MCF 10A (cell line): ENCODE measurements at regions of chr4 and their contacts with region 1.

Region 1: DNA sequence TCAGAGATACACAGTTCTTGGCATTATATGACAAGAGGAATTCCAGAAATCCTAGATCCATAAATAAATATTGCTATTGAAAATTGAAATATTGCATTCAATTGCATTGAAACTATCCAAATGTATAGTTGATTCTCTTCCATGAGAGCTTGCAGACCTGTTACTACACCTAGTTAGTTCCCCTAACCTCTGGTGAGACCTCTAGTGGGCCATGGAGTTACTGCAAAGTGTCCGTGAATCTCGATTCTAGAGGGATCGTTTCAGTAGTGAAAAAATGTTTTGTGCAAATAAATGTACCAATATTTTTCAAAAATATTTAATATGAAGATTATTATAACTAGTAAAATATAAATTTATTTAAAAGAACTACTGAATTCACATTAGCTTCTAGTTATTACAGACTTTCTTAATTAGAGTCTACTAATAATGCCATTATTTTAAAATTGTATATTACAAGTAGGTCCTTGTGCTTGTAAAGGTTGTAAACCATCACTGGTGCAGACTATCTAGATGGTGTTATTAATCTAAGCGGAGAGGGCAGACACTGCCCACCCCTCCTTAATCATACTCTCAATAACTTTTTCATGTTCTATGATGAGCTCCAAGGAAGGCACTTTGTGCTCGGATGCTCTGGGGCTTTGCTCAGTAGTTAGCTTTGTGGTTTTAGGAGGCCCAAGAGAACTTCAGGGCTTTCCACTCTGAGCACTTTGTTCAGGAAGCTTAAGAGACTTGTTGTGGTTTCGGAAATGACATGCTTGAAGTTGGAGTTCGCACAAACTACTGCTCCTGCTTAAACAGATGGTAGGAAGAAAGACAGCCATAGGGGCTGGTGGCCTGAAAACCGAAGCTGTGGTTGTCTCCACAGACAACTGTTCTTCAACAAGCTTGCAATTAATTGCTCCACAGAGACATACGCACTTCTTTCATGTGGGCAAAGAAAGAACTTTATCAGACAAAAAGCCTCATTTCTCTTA is 42.8 kb downstream of the IL21 start:
- DNase-seq: peak; percentile 78
- H3K4me3 Mint-ChIP-seq: no peak overlapping the region
- H3K27ac Mint-ChIP-seq: no peak overlapping the region
- H3K4me1 Mint-ChIP-seq: peaks cover 7% of the 10 kb centered on the region
- H3K27me3 Mint-ChIP-seq: peaks cover 10% of the 10 kb centered on the region
- CTCF ChIP-seq: peak; percentile 60

Region 2: GRCh38 chr4:121863799-121864198 is 714.3 kb before region 1 on chr4:
- CTCF ChIA-PET with region 1: no interaction called
- POLR2A ChIA-PET with region 1: no interaction called
- intact Hi-C with region 1: no loop called
- DNase-seq: no peak
- H3K4me3 Mint-ChIP-seq: no peak overlapping the region
- H3K27ac Mint-ChIP-seq: no peak overlapping the region
- H3K4me1 Mint-ChIP-seq: peaks cover 5% of the 10 kb centered on the region
- H3K27me3 Mint-ChIP-seq: no peaks in the 10 kb centered on the region
- CTCF ChIP-seq: no peak

Region 3: DNA sequence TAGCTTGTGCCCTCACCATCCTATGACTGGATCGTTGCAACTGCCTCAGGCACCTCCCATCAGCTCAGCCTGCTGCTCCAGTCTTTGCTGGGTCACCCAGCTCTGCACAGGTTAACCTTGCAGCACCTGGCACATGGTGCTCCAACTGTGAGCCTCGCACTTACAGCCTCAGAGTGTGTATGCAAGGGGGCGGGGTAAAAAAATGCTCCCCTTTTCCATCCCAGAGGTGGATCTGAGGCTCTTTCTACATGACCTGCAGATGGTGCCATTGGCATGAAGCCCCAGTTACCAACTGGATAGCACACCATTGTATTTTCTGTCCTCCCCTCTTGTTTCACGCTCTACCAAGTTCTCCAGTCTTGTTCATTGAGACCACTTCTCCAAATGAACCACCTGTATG is 580.1 kb before region 1 on chr4:
- CTCF ChIA-PET with region 1: no interaction called
- POLR2A ChIA-PET with region 1: no interaction called
- intact Hi-C with region 1: loop called (anchors 5 kb)
- DNase-seq: peak; percentile 33
- H3K4me3 Mint-ChIP-seq: no peak overlapping the region
- H3K27ac Mint-ChIP-seq: no peak overlapping the region
- H3K4me1 Mint-ChIP-seq: peaks cover 6% of the 10 kb centered on the region
- H3K27me3 Mint-ChIP-seq: peaks cover 13% of the 10 kb centered on the region
- CTCF ChIP-seq: no peak

Region 4: DNA sequence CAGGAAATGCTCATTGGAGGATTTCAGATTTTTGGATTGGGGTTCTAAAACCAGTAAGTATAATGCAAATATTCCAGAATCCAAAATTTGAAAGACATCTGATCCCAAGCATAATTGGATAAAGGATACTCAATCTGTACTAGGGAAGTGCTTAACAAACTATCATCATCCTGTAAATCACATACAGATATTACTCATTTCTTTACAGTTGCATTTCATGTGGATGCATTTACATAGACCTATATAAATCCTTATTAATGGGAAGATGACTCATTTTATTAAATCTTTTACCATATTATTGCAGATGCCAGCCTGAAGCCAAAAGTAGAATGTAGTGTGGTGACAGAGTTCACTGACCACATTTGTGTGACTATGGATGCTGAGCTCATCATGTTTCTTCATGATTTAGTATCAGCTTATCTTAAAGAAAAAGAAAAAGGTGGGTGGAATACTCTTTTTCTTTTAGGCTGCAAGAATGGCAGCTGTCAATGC is 221.7 kb before region 1 on chr4:
- CTCF ChIA-PET with region 1: interaction called, 10 read pairs
- POLR2A ChIA-PET with region 1: no interaction called
- intact Hi-C with region 1: no loop called
- DNase-seq: no peak
- H3K4me3 Mint-ChIP-seq: no peak overlapping the region
- H3K27ac Mint-ChIP-seq: no peak overlapping the region
- H3K4me1 Mint-ChIP-seq: no peaks in the 10 kb centered on the region
- H3K27me3 Mint-ChIP-seq: no peaks in the 10 kb centered on the region
- CTCF ChIP-seq: no peak

Region 5: DNA sequence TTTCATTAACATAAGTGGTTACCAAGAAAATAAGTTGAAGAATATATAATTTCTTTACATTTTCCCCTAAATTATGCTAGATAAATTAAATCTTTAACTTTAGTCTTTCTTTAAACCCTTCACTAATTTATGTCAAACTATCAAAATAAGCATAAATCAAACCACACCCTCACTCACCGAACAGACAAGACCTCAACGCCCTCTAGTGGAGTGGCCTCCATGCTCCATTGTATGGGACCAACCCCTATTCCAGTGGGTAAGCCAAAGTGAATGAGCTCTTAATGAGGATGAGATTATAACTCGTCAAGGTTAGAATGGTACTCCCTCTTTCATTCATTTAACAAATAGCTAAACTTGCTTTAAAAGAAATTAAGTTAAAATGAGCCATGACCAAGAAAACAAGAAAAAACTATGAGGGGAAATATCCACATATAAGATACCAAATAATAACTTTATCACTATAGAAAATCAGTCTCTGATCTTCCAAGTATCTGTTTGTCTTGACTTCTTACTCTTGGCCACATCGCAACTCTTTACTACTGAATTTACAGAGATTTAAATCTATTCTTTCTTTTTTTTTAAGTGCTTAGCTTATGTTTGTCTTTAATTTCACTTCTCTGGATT is 138.8 kb after region 1 on chr4:
- CTCF ChIA-PET with region 1: interaction called, 13 read pairs
- POLR2A ChIA-PET with region 1: no interaction called
- intact Hi-C with region 1: no loop called
- DNase-seq: peak; percentile 84
- H3K4me3 Mint-ChIP-seq: no peak overlapping the region
- H3K27ac Mint-ChIP-seq: no peak overlapping the region
- H3K4me1 Mint-ChIP-seq: peaks cover 6% of the 10 kb centered on the region
- H3K27me3 Mint-ChIP-seq: no peaks in the 10 kb centered on the region
- CTCF ChIP-seq: peak; percentile 75